GM23248 (cell line): ENCODE measurements at regions of chr11 and their contacts with region 1.

Region 1: GRCh38 chr11:59791639-59792038 is 18.9 kb downstream of the MRPL16 start:
- DNase-seq: no peak
- H3K4me3 ChIP-seq: no peak overlapping the region
- H3K27ac ChIP-seq: no peak overlapping the region
- H3K4me1 ChIP-seq: peaks cover 20% of the 10 kb centered on the region
- H3K27me3 ChIP-seq: no peaks in the 10 kb centered on the region

Region 2: DNA sequence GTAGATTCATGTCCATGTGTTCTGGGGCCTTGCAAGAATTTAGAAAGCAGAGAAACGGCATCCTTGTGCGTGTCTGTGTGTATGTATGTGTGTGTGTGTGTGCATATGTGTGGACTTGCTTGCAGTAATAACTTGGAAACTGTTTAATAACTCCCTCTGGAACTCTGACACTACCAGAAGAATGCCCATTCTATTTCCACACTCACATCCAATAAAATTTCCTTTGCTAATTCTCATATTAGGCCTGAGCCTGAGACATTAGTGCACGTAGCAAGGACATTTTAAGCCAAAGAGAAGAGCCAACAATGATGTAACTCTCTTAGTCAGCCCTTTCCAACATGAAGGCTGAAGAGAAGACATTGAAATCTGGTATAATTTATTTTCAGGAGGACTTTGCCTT is 331.7 kb before region 1 on chr11:
- in situ Hi-C with region 1: no loop called
- DNase-seq: no peak
- H3K4me3 ChIP-seq: no peak overlapping the region
- H3K27ac ChIP-seq: no peak overlapping the region
- H3K4me1 ChIP-seq: peaks cover 11% of the 10 kb centered on the region; the same call in 1 of the 2 replicates
- H3K27me3 ChIP-seq: no peaks in the 10 kb centered on the region

Region 3: DNA sequence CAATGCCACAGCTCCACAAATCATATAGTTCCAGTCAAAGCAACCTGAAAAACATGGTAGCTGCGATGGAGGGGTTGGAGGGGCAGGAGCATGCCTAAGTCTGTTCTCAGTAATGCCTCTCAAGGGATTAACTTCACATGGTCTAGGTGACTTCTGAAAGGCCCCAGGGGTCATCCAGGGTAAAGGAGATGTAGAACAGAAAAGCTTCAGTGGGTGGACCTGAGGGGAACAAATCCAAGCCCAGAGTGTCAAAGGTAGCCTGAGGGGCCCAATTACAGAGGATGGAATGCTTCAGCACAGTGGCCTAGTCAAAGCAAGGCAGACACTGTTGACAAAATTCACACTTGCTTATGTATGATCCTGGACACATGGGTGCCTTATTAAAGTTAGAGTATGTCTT is 257.0 kb before region 1 on chr11:
- in situ Hi-C with region 1: loop called (anchors 10 kb)
- DNase-seq: no peak
- H3K4me3 ChIP-seq: no peak overlapping the region
- H3K27ac ChIP-seq: no peak overlapping the region
- H3K4me1 ChIP-seq: peaks cover 6% of the 10 kb centered on the region; the same call in 1 of the 2 replicates
- H3K27me3 ChIP-seq: no peaks in the 10 kb centered on the region